PC-3 (cell line): ENCODE measurements at regions of chr7 and their contacts with region 1.

Region 1: DNA sequence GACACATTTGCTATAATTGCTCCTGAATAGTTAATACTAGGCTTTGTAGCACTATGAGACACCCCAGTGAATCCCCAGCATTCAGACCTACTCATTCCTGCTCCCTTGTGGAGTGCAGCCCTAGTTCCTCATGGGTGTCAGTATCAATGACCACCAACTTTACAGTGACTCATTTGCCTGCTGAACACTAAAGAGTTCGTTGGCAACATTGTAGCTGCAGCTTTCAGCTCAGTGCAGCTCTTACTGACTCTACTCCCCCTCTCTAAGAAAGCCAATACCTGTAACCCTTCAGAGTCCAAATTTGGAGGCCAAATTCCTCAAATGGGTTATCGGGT is 127.1 kb upstream of the MTPN start:
- DNase-seq: no peak
- ATAC-seq: no peak
- H3K4me3 ChIP-seq: no peak overlapping the region
- H3K27ac ChIP-seq: no peak overlapping the region
- H3K4me1 ChIP-seq: no peaks in the 10 kb centered on the region
- H3K27me3 ChIP-seq: peaks cover 16% of the 10 kb centered on the region
- CTCF ChIP-seq: no peak

Region 2: DNA sequence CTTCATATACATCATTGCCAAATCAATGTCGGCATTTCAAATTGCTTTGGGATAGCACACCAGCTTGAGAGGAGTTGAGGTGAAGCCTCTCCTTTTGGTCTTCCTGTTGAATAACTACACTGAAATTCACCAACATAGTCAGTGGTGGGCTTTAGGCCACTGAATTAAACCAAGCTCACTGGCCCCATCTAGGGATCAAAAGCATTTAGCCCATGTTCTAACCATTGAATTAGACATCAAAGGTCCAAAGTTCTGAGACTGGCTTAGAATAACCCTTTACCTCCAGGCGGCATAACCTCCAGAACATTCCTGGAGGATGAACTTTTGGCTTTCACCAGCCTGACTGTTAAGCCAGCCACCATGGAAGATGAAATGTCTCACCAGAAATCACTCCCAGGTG is 1403.0 kb before region 1 on chr7:
- CTCF ChIA-PET with region 1: no interaction called
- POLR2A ChIA-PET with region 1: no interaction called
- intact Hi-C with region 1: no loop called
- DNase-seq: peak; percentile 62
- ATAC-seq: peak; percentile 80
- H3K4me3 ChIP-seq: no peak overlapping the region
- H3K27ac ChIP-seq: no peak overlapping the region
- H3K4me1 ChIP-seq: no peaks in the 10 kb centered on the region
- H3K27me3 ChIP-seq: no peaks in the 10 kb centered on the region
- CTCF ChIP-seq: peak; percentile 73

Region 3: GRCh38 chr7:136312592-136312991 is 208.4 kb after region 1 on chr7:
- CTCF ChIA-PET with region 1: no interaction called
- POLR2A ChIA-PET with region 1: interaction called, 24 read pairs
- intact Hi-C with region 1: no loop called
- DNase-seq: no peak
- ATAC-seq: no peak
- H3K4me3 ChIP-seq: no peak overlapping the region
- H3K27ac ChIP-seq: no peak overlapping the region
- H3K4me1 ChIP-seq: no peaks in the 10 kb centered on the region
- H3K27me3 ChIP-seq: no peaks in the 10 kb centered on the region
- CTCF ChIP-seq: no peak